GM13977 (cell line): ENCODE measurements at regions of chr19 and their contacts with region 1.

Region 1: GRCh38 chr19:16315825-16316505 is 8.7 kb upstream of the KLF2 start:
- DNase-seq: no peak
- CTCF ChIP-seq: no peak

Region 2: DNA sequence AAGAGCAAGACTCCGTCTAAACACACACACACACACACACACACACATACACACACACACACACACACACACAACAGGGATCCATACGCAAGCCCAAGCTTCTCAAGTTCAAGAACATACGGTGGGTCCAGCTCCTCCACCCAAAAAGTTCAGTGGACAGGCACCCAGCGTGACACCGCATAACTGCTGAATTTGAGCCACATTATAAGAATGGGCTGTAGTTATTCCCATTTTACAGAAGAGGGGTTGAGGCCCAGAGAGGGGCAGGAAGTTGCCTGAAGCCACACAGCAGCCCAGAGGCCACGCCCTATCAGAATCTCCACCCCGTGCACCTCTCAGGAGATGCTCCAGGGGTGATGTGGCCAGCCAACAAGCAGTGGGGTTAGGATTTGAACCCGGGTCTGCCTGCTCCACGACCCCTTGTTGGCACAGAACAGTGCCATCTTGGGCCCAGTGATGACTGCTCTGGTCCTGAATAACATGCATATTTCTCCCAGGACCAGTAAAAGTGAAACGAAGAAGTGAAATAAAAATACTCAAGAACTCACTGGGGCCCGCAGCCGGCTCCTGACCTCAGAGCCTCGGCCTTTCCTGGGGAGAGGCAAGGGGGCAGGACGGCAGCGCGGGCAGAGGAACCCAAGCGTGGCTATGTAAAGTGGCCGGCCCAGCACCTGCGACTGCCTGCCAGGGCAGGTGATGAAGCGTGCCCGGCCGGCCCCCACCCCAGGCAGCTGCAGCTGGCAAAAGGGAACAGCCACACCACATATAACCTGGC is 56.4 kb before region 1 on chr19:
- in situ Hi-C with region 1: loop called (anchors 10 kb)
- DNase-seq: peak; percentile 65
- CTCF ChIP-seq: no peak